ENCODE measurements at regions of chr2 and their contacts with region 1.

Region 1: DNA sequence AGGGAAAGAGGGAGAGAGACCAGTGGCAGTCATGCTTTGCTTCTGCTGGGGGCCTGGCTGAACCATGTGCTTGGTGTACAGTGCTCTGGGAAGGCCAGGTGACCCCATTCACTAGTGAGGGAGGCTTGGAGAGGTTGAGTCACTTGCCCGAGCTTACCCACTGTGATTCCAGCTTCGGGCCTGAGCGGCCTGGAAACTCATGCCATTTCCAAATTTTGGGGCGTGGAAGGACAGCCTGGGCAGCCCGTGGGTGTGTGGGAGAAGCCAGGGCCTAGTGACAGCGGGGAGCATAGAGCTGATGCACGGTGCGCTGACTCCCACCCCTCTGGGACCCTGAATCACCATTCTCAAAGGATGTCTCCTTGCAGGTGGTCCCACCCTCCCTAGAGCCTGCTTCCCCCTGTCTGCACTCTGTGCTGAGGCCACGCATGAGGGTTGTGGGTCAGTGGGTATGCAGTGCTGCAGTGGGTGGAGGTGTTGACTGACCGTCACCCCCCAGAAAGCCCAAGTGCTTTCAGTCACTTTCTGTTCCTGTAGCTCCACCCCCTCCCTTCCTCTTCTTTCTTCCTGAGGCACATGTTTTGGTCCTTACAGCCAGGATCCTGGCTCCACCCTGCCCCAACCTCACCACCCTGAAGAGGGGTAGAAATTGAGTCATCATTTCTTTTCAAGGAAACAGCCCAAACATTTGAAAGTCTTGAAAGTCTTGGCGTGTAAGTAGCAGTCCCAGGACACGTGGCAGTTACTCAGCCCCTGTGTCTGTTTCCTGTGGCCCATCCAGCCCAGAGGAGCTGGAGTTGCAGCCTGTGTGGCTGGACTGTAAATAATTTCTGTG is 69.3 kb upstream of the MCFD2 start:
- DNase-seq: peak; percentile 54
- H3K4me3 Mint-ChIP-seq: peak overlapping the region; percentile 27
- H3K27ac Mint-ChIP-seq: peak overlapping the region; percentile 94
- H3K4me1 Mint-ChIP-seq: peaks cover 71% of the 10 kb centered on the region
- H3K27me3 Mint-ChIP-seq: no peaks in the 10 kb centered on the region

Region 2: GRCh38 chr2:46943881-46944798 is 40.7 kb before region 1 on chr2:
- intact Hi-C with region 1: loop called (anchors 1 kb)
- DNase-seq: peak; percentile 75
- H3K4me3 Mint-ChIP-seq: peak overlapping the region; percentile 99
- H3K27ac Mint-ChIP-seq: peak overlapping the region; percentile 99
- H3K4me1 Mint-ChIP-seq: peaks cover 59% of the 10 kb centered on the region
- H3K27me3 Mint-ChIP-seq: no peaks in the 10 kb centered on the region

Region 3: DNA sequence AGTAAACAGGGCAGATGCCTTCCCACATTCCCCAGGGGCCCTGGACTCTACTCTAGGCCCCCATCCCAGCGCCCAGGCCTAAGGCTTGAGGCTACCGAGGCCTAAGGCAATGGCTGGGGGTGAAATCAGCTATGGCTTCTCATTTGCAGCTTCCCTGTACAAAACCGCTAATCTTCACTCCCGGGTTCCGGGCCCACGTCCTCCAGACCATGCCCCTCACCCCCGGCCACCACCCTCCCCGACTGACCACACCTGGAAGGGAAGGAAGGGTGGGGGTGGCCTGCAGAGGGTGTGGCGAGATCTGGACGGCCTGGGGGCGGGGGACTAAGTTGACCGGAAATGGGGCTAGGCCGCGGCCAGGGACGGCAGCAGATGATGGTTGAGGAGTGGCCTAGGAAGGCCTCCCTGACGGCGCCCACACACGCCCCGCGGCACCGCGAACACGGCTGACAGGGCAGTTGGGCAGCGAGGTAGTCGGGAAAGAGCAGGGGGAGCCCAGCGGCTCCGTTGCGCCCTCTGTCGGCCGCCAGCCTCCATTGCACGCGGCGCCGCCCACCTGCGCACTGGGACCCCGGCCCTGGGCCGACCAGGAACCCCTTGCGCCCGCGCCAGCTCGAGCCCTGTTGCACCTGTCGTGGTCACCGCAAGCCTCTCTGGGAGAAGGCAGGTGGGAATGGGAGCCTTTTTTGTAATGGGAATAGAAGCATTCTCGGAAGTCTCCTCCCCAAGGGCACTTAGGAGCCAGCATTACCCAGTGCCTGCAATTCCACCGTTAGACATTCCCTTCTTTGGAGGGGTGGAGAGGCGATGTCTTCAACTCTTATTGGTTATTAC is 287.4 kb after region 1 on chr2:
- intact Hi-C with region 1: loop called (anchors 1 kb)
- DNase-seq: peak; percentile 32
- H3K4me3 Mint-ChIP-seq: no peak overlapping the region
- H3K27ac Mint-ChIP-seq: no peak overlapping the region
- H3K4me1 Mint-ChIP-seq: no peaks in the 10 kb centered on the region
- H3K27me3 Mint-ChIP-seq: peaks cover 10% of the 10 kb centered on the region